Left ventricle myocardium inferior (tissue), 1 donor: ENCODE measurements at regions of chr21 and their contacts with region 1.

Region 1: GRCh38 chr21:28899744-28900143 is 92.9 kb downstream of the LTN1 start:
- DNase-seq: no peak
- H3K4me3 ChIP-seq: no peak overlapping the region
- H3K27ac ChIP-seq: no peak overlapping the region
- H3K4me1 ChIP-seq: no peaks in the 10 kb centered on the region
- H3K27me3 ChIP-seq: no peaks in the 10 kb centered on the region
- CTCF ChIP-seq: no peak

Region 2: GRCh38 chr21:28852706-28853105 is 47.0 kb before region 1 on chr21:
- intact Hi-C with region 1: loop called (anchors 10 kb)
- DNase-seq: no peak
- H3K4me3 ChIP-seq: no peak overlapping the region
- H3K27ac ChIP-seq: no peak overlapping the region
- H3K4me1 ChIP-seq: peaks cover 15% of the 10 kb centered on the region
- H3K27me3 ChIP-seq: no peaks in the 10 kb centered on the region
- CTCF ChIP-seq: no peak

Region 3: GRCh38 chr21:29616352-29616751 is 716.6 kb after region 1 on chr21:
- intact Hi-C with region 1: no loop called
- DNase-seq: no peak
- H3K4me3 ChIP-seq: no peak overlapping the region
- H3K27ac ChIP-seq: no peak overlapping the region
- H3K4me1 ChIP-seq: no peaks in the 10 kb centered on the region
- H3K27me3 ChIP-seq: no peaks in the 10 kb centered on the region
- CTCF ChIP-seq: no peak